Right cardiac atrium (tissue), 5 donors: ENCODE measurements at regions of chr17 and their contacts with region 1.

Region 1: GRCh38 chr17:72631949-72632684 is 460.4 kb downstream of the SLC39A11 start:
- DNase-seq: peak in 1 of 3 donors; percentile 29
- ATAC-seq: peak; percentile 52 to 92
- H3K4me3 ChIP-seq: no peak overlapping the region
- H3K27ac ChIP-seq: no peak overlapping the region
- H3K4me1 ChIP-seq: no peaks in the 10 kb centered on the region
- H3K27me3 ChIP-seq: no peaks in the 10 kb centered on the region

Region 2: DNA sequence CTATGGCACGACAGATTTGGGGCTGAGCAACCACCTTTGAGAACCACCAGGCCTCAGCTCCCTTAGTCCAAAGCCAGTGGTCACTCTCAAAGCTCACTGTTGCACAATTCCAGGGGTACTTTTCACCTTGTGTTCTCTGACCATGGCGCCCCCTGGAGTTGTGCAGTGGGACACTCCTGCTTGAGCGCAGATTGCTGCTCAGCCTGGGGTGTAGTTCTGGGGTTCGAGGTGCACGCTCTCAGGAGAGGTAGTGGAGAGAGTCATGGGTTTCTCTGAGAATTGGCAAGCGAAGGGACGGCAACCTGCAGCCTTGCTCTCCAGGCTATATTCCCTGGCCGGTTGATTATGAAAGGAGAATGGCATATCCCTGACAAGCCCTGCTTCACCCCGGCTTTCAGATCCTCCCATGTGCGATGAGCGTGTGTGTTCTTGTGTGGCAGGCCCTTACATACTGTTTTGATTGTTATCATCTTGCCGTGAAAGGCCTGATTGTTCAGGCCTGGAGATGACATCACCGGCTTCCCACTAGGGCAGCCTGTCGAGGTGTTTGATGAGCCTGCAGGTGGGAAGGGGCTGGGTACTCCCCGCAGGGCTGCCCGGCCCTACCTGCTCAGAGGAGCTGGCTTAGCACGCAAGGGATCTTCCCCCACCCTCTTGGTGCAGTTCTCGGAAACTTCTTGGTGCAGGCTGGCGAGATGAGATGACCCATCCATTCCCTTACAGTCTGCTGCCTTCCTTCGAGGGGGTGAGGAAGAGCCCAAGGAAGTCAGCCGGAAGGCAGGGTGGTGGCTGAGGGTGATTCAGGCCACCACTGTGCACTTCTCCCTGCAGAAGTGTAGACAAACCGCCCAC is 29.2 kb after region 1 on chr17:
- intact Hi-C with region 1: loop called in 1 of 4 experiments (anchors 2 kb)
- DNase-seq: no peak
- ATAC-seq: no peak
- H3K4me3 ChIP-seq: no peak overlapping the region
- H3K27ac ChIP-seq: no peak overlapping the region
- H3K4me1 ChIP-seq: no peaks in the 10 kb centered on the region
- H3K27me3 ChIP-seq: no peaks in the 10 kb centered on the region